Activated CD4-positive, alpha-beta memory T cell treated with anti-CD3 and anti-CD28 coated beads for 36 hours (primary cell): ENCODE measurements at regions of chr6 and their contacts with region 1.

Region 1: DNA sequence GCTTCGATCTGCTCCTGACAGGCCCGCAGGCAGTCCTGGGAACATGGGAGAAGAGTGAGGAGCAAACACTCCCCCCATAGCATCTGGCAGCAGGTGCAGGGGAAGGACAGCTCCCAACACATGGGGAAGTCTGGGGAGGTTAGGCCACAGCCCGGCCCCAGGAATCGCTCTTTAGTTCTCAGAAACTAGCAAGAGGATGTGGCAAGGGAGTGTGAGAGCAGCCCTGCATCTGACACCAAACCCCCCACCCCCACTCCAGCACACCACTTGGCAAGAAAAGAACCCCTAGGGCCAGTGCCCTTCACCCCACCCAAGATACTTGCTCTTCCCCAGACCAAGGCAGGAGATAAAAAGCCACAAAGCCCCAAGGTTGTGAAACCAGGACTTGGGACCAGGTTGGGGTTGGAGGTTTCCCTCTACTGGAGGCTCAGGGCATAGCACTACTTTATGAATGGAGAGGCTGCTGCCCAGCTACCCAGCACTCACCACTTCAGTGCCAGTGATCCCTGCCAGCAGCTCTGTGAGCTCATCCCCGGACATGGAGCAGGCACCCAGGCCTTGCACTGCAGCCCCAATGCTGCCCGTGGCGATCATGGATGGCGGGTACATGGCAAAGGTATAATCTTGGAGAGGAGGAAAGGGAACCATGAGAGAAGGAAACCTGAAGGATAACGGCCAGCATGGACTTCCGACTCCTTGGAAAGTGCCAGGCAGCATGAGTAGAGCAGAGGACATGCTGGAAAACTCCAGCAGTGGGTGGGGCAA is 5.4 kb downstream of the CCND3 start:
- DNase-seq: peak; percentile 87
- H3K4me3 Mint-ChIP-seq: peak overlapping the region; percentile 99
- H3K27ac Mint-ChIP-seq: peak overlapping the region; percentile 90
- H3K4me1 Mint-ChIP-seq: peaks cover 53% of the 10 kb centered on the region
- H3K27me3 Mint-ChIP-seq: no peaks in the 10 kb centered on the region

Region 2: GRCh38 chr6:41846666-41847237 is 89.5 kb before region 1 on chr6:
- CTCF ChIA-PET with region 1: interaction called, 4 read pairs
- POLR2A ChIA-PET with region 1: no interaction called
- intact Hi-C with region 1: loop called (anchors 1 kb)
- DNase-seq: peak; percentile 67
- H3K4me3 Mint-ChIP-seq: no peak overlapping the region
- H3K27ac Mint-ChIP-seq: no peak overlapping the region
- H3K4me1 Mint-ChIP-seq: no peaks in the 10 kb centered on the region
- H3K27me3 Mint-ChIP-seq: no peaks in the 10 kb centered on the region

Region 3: DNA sequence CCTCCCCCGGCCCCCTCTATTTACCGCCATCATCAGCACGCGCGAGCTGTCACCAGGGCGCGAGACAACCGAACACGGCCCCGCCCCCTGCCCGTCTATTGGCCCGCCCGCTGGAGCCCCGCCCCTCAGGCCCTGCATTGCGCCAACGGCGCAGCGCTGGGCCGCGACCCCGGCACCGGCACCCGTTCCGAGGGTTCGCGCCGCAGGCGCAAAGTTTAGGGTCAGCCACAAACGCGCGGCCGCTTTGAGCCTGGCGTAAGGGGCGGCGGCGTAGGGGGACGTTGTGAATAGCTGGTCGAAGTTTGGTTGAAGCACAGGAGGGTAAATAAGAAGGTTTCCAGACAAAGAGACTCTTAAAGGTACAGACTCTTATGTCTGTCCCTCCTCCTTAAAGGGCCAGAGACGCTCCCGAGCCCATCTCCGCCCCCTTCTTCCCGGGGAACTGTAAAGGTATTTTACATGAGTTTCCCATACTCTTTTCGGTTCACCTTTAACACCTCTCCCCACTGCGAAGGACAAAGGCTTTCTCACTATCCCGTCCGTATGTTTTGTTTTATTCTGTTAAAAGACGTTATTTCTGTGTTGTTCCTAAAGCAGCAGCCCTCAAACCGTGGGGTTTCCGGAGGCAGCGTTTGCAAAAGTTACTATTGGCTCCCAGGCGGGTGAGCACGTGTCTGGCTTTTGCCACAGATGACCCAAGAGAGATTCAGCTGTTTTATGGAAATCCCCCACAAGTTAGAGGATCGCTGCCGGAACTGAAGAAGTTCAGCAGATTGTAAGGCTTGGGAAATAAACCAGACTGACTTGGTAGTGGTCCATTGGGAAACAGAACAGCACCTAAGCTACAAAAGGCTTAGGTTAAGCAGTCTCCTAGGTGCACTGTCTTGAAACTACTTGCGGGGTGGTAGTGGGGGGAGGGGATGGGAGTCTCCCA is 40.7 kb before region 1 on chr6 and contains the start of gene USP49:
- CTCF ChIA-PET with region 1: interaction called, 7 read pairs
- POLR2A ChIA-PET with region 1: no interaction called
- intact Hi-C with region 1: loop called (anchors 2 kb)
- DNase-seq: peak; percentile 94
- H3K4me3 Mint-ChIP-seq: no peak within 1 kb of the TSS
- H3K27ac Mint-ChIP-seq: peak within 1 kb of the TSS; percentile 89
- H3K4me1 Mint-ChIP-seq: peaks cover 9% of the 10 kb centered on the region
- H3K27me3 Mint-ChIP-seq: no peaks in the 10 kb centered on the region
- total RNA-seq, gene USP49: 6.1 to 6.3 TPM